ENCODE measurements at regions of chr17 and their contacts with region 1.

Region 1: GRCh38 chr17:46212634-46213435 is 19.6 kb upstream of the KANSL1 start:
- DNase-seq: peak; percentile 89
- H3K4me3 Mint-ChIP-seq: no peak overlapping the region
- H3K27ac Mint-ChIP-seq: no peak overlapping the region
- H3K4me1 Mint-ChIP-seq: peaks cover 21% of the 10 kb centered on the region
- H3K27me3 Mint-ChIP-seq: no peaks in the 10 kb centered on the region

Region 2: DNA sequence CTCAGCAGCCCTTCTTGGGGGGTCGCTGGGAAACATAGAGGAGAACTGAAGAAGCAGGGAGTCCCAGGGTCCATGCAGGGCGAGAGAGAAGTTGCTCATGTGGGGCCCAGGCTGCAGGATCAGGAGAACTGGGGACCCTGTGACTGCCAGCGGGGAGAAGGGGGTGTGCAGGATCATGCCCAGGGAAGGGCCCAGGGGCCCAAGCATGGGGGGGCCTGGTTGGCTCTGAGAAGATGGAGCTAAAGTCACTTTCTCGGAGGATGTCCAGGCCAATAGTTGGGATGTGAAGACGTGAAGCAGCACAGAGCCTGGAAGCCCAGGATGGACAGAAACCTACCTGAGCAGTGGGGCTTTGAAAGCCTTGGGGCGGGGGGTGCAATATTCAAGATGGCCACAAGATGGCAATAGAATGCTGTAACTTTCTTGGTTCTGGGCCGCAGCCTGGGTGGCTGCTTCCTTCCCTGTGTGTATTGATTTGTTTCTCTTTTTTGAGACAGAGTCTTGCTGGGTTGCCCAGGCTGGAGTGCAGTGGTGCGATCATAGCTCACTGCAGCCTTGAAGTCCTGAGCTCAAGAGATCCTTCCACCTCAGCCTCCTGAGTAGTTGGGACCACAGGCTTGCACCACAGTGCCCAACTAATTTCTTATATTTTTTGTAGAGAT is 210.4 kb before region 1 on chr17:
- intact Hi-C with region 1: loop called (anchors 10 kb)
- DNase-seq: peak; percentile 93
- H3K4me3 Mint-ChIP-seq: no peak overlapping the region
- H3K27ac Mint-ChIP-seq: no peak overlapping the region
- H3K4me1 Mint-ChIP-seq: peaks cover 4% of the 10 kb centered on the region
- H3K27me3 Mint-ChIP-seq: peaks cover 6% of the 10 kb centered on the region

Region 3: GRCh38 chr17:46044286-46044928 is 168.4 kb before region 1 on chr17:
- intact Hi-C with region 1: loop called (anchors 2 kb)
- DNase-seq: peak; percentile 82
- H3K4me3 Mint-ChIP-seq: no peak overlapping the region
- H3K27ac Mint-ChIP-seq: no peak overlapping the region
- H3K4me1 Mint-ChIP-seq: peaks cover 16% of the 10 kb centered on the region
- H3K27me3 Mint-ChIP-seq: no peaks in the 10 kb centered on the region

Region 4: GRCh38 chr17:46139432-46140210 is 73.2 kb before region 1 on chr17:
- intact Hi-C with region 1: no loop called
- DNase-seq: no peak
- H3K4me3 Mint-ChIP-seq: no peak overlapping the region
- H3K27ac Mint-ChIP-seq: no peak overlapping the region
- H3K4me1 Mint-ChIP-seq: peaks cover 75% of the 10 kb centered on the region
- H3K27me3 Mint-ChIP-seq: no peaks in the 10 kb centered on the region